ENCODE measurements at regions of chr7 and their contacts with region 1.

Region 1: DNA sequence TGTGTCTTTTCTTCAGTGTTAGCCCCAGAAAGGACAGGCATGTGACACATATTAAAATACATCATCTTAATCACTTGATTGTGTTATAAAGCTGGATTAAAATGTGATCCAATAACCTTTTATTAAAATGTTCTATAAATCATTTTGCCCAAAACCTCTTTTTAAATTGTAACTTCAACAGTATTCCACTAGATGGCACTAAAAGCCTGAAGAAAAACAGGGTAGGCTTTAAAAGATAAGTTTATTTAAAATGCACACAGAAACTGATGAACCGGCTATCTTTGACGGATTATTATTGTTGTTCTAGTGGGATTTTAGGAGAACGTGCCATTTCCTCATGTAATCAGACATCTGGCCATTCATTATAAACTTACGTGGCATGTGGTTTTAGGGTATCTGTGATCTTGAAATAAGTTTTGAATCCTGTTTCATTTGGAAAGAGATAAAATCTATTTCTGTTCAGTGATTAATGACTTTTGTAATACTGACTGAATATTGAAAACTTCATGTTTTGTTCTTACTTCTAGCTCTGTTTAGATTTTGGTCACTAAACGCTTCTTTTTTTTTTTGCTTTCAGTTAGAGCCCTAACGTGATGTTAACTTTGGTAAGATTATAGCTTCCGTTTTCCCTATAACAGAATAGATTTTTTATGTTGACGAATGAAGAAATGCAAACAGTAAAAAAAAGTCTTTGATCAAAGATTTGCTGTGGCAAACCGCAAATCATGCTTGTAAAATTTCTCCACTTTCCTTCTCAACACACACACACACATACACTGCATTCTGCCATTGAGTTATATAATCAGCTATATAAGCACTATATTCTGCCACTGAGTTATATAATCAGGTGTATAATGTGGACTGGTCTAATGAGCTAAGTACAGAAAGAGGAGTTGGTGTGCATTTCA is 13.6 kb downstream of the VPS50 start:
- DNase-seq: no peak
- H3K4me3 Mint-ChIP-seq: no peak overlapping the region
- H3K27ac Mint-ChIP-seq: no peak overlapping the region
- H3K4me1 Mint-ChIP-seq: no peaks in the 10 kb centered on the region
- H3K27me3 Mint-ChIP-seq: no peaks in the 10 kb centered on the region

Region 2: GRCh38 chr7:93442478-93443224 is 196.9 kb after region 1 on chr7:
- intact Hi-C with region 1: loop called (anchors 5 kb)
- DNase-seq: peak; percentile 81
- H3K4me3 Mint-ChIP-seq: no peak overlapping the region
- H3K27ac Mint-ChIP-seq: no peak overlapping the region
- H3K4me1 Mint-ChIP-seq: no peaks in the 10 kb centered on the region
- H3K27me3 Mint-ChIP-seq: peaks cover 2% of the 10 kb centered on the region

Region 3: DNA sequence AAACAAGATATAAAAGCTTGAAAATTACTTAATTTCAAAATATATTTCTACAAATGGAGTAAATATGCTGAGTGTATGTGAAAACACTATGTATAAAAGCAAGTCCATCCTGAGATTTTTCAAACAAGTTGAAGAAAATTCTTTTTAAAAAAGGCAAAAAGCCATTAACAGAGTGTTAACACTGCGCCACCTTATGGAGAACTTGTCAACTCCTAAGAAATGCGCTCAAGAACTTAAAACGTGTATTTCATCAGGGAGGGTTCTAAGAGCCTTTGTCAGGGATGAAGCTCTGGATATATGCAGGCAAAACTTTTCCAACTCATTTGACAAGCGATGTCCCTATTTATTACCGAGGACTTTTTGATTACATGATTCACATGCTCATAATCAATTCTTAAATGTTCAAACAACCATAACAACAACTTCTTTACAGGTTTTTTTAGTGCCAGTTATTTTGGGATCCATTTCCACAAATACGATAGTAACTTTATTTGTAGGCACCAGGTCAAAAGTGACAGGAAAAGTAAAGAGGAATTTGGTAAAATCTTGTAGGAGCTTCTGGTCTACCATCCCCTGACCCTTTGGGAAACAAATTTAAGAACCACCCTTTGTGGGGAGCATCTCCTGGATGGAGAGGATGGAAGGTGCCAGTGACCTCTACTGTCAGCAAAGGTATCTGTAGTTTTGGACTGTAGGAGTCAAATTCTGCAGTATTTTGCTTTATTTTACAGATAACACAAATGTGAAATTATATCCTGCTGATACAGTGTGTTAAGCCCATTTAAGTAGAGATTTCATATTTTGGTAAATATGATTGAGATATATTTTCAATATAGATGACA is 305.5 kb after region 1 on chr7:
- intact Hi-C with region 1: loop called (anchors 1 kb)
- DNase-seq: no peak
- H3K4me3 Mint-ChIP-seq: no peak overlapping the region
- H3K27ac Mint-ChIP-seq: no peak overlapping the region
- H3K4me1 Mint-ChIP-seq: no peaks in the 10 kb centered on the region
- H3K27me3 Mint-ChIP-seq: no peaks in the 10 kb centered on the region